ENCODE measurements at regions of chr12 and their contacts with region 1.

Region 1: GRCh38 chr12:50187084-50187900 is 20.1 kb upstream of the CERS5 start:
- DNase-seq: peak; percentile 75
- H3K4me3 ChIP-seq: no peak overlapping the region
- H3K27ac ChIP-seq: peak overlapping the region; percentile 71
- H3K4me1 ChIP-seq: peaks cover 52% of the 10 kb centered on the region
- H3K27me3 ChIP-seq: no peaks in the 10 kb centered on the region
- CTCF ChIP-seq: 0 out of 2 replicates have a peak, but pooled peaks have one; percentile 15

Region 2: GRCh38 chr12:49903695-49904423 is 283.4 kb before region 1 on chr12 and contains the start of gene FAIM2:
- CTCF ChIA-PET with region 1: no interaction called
- POLR2A ChIA-PET with region 1: no interaction called
- intact Hi-C with region 1: no loop called
- DNase-seq: peak; percentile 40
- H3K4me3 ChIP-seq: peak within 1 kb of the TSS; percentile 23
- H3K27ac ChIP-seq: no peak within 1 kb of the TSS
- H3K4me1 ChIP-seq: no peaks in the 10 kb centered on the region
- H3K27me3 ChIP-seq: no peaks in the 10 kb centered on the region
- CTCF ChIP-seq: no peak
- total RNA-seq, gene FAIM2: 0.11 TPM in 1 of 2 replicates, not detected in the other

Region 3: DNA sequence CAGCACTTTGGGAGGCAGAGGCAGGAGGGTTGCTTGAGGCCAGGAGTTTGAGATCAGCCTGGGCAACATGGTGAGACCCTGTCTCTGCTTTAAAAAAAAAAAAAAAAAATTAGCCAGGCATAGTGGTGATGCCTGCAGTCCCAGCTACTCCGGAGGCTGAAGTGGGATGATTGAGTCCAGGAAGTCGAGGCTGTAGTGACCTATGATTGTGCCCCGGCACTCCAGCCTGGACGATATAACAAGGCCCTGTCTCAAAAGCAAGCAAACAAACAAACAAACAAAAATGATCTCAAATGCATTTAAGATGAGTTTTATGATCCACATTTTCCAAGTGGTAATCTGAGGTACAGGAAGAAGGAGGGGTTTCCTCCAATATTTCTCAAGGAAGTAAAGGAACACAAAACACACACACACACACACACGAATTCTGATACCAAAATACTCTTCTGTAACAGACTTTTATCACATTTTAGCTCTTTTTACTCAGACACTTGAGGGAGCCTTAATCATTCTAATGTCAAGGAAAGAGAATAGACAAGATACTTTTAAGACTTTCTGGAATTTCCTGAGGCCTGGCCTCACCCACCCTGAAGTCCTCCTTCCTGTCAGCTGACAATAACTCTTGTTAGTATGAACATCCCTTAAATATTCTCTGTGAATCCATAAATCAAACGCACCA is 24.2 kb after region 1 on chr12:
- CTCF ChIA-PET with region 1: no interaction called
- POLR2A ChIA-PET with region 1: no interaction called
- intact Hi-C with region 1: no loop called
- DNase-seq: peak; percentile 87
- H3K4me3 ChIP-seq: peak overlapping the region; percentile 25
- H3K27ac ChIP-seq: peak overlapping the region; percentile 82
- H3K4me1 ChIP-seq: peaks cover 37% of the 10 kb centered on the region
- H3K27me3 ChIP-seq: no peaks in the 10 kb centered on the region
- CTCF ChIP-seq: peak; percentile 47; the same call in 1 of the 2 replicates

Region 4: DNA sequence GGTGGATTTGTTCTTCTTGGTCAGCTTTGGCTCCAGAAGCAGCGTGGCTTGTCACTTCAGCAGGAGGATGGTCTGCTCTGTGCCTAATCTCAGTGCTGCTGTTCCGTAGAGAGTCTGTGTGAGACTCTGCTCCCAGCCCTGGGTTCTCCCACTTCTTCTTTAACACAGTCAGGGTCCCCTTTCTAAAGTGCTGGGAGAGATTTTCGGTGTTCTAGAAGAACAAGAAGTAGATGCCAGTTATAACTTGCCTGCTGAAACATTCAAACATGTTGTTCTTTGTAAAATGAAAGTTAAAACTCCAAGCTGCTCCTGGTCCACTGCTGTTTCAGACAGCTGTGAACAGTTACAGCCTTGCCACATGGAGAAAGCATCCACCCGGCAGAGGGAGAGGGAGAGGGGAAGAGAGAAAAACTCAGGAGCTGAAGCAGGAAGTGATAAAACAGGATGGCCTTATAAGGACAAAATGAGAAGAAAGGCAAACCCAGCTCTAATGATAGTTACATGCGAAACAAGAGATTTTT is 35.0 kb after region 1 on chr12:
- CTCF ChIA-PET with region 1: no interaction called
- POLR2A ChIA-PET with region 1: interaction called, 3 read pairs
- intact Hi-C with region 1: loop called (anchors 5 kb)
- DNase-seq: peak; percentile 93
- H3K4me3 ChIP-seq: peak overlapping the region; percentile 58
- H3K27ac ChIP-seq: peak overlapping the region; percentile 91
- H3K4me1 ChIP-seq: peaks cover 21% of the 10 kb centered on the region
- H3K27me3 ChIP-seq: no peaks in the 10 kb centered on the region
- CTCF ChIP-seq: no peak

Region 5: GRCh38 chr12:50282721-50283228 is 95.5 kb after region 1 on chr12:
- CTCF ChIA-PET with region 1: no interaction called
- POLR2A ChIA-PET with region 1: interaction called, 18 read pairs
- intact Hi-C with region 1: no loop called
- DNase-seq: no peak
- H3K4me3 ChIP-seq: peak overlapping the region; percentile 78
- H3K27ac ChIP-seq: no peak overlapping the region
- H3K4me1 ChIP-seq: peaks cover 10% of the 10 kb centered on the region
- H3K27me3 ChIP-seq: no peaks in the 10 kb centered on the region
- CTCF ChIP-seq: no peak

Region 6: GRCh38 chr12:50297027-50297426 is 109.7 kb after region 1 on chr12:
- CTCF ChIA-PET with region 1: no interaction called
- POLR2A ChIA-PET with region 1: no interaction called
- intact Hi-C with region 1: no loop called
- DNase-seq: peak; percentile 22
- H3K4me3 ChIP-seq: no peak overlapping the region
- H3K27ac ChIP-seq: no peak overlapping the region
- H3K4me1 ChIP-seq: peaks cover 4% of the 10 kb centered on the region
- H3K27me3 ChIP-seq: no peaks in the 10 kb centered on the region
- CTCF ChIP-seq: no peak

Measured in A673 (cell line).